Left cardiac atrium (tissue), 4 donors: ENCODE measurements at regions of chr3 and their contacts with region 1.

Region 1: DNA sequence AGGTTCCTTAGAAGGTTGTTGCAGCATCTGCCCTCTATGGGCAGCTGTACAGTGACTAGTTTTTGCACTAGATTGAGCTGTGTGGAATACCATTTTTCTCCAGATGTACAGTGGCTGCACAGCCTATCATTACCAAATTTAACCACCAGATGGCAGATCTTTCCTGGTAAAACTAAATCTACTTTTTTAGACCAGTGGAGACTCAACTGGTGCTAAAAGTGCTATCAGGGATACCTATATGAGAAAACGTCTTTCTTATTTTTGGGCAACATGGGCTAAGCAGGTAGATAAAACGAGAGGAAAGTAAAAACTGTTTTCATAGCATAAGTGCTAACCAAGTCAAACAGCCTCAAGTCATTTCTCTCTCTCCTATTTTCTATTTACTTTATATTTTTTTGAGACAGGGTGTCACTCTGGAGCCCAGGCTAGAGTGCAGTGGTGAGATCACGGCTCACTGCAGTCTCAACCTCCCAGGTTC is 21.2 kb downstream of the IGSF10 start:
- DNase-seq: no peak
- ATAC-seq: peak; percentile 79 to 83

Region 2: GRCh38 chr3:151837057-151837456 is 397.4 kb after region 1 on chr3:
- intact Hi-C with region 1: loop called (anchors 2 to 5 kb)
- DNase-seq: no peak
- ATAC-seq: peak in 1 of 2 donors; percentile 81

Region 3: DNA sequence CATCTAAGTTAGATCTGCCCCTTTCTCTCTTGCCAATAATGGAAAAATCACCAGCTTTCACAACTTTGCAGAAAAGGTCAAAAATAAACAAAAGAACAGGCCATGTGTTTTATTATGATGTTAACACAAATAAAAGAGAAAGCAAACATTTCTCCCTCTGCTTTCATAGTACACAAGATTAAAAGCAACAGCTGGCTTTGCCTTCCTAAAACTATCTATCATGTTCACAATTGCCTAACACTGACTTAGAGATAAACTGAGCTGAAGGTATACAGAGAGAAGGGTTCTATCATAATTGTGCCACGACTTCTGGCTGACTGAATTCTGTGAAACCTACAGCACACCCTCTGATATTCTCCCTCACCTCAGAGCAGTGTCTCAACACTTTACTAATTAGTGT is 403.6 kb after region 1 on chr3:
- intact Hi-C with region 1: loop called in 1 of 2 experiments (anchors 5 kb)
- DNase-seq: no peak
- ATAC-seq: peak in 1 of 2 donors; percentile 37

Region 4: GRCh38 chr3:151918253-151919029 is 478.8 kb after region 1 on chr3:
- intact Hi-C with region 1: loop called (anchors 2 to 5 kb)
- DNase-seq: no peak
- ATAC-seq: peak; percentile 64 to 71

Region 5: GRCh38 chr3:152121292-152121654 is 681.6 kb after region 1 on chr3:
- intact Hi-C with region 1: no loop called
- DNase-seq: no peak
- ATAC-seq: peak; percentile 12 to 95